ENCODE measurements at regions of chr4 and their contacts with region 1.

Region 1: GRCh38 chr4:121823505-121824170 is at the start of gene CCNA2:
- DNase-seq: peak; percentile 94
- ATAC-seq: peak; percentile 99
- H3K4me3 ChIP-seq: peak within 1 kb of the TSS; percentile 46 to 96 (median 74)
- H3K4me3 Mint-ChIP-seq: peak within 1 kb of the TSS; percentile 90
- H3K27ac ChIP-seq: peak within 1 kb of the TSS; percentile 62 to 82
- H3K27ac Mint-ChIP-seq: peak within 1 kb of the TSS; percentile 87
- H3K4me1 ChIP-seq: peaks cover 8 to 10% of the 10 kb centered on the region in 2 donors
- H3K4me1 Mint-ChIP-seq: peaks cover 16% of the 10 kb centered on the region
- H3K27me3 ChIP-seq: no peaks in the 10 kb centered on the region
- H3K27me3 Mint-ChIP-seq: no peaks in the 10 kb centered on the region
- CTCF ChIP-seq: no peak
- total RNA-seq, gene CCNA2: 0.94 and 1.8 TPM in 2 replicates

Region 2: GRCh38 chr4:121696581-121697461 is 126.8 kb before region 1 on chr4 and contains the start of gene ANXA5:
- CTCF ChIA-PET with region 1: no interaction called
- POLR2A ChIA-PET with region 1: no interaction called
- intact Hi-C with region 1: loop called (anchors 1 kb)
- DNase-seq: peak; percentile 78
- ATAC-seq: peak; percentile 90
- H3K4me3 ChIP-seq: peak within 1 kb of the TSS; percentile 73 to 85 (median 79)
- H3K4me3 Mint-ChIP-seq: peak within 1 kb of the TSS; percentile 99
- H3K27ac ChIP-seq: peak within 1 kb of the TSS; percentile 39 to 69
- H3K27ac Mint-ChIP-seq: peak within 1 kb of the TSS; percentile 98
- H3K4me1 ChIP-seq: peaks cover 13 to 14% of the 10 kb centered on the region in 2 donors
- H3K4me1 Mint-ChIP-seq: peaks cover 36% of the 10 kb centered on the region
- H3K27me3 ChIP-seq: peaks cover 0 to 12% (median 0%) of the 10 kb centered on the region in 4 experiments
- H3K27me3 Mint-ChIP-seq: peaks cover 12% of the 10 kb centered on the region
- CTCF ChIP-seq: no peak
- total RNA-seq, gene ANXA5: 66.5 and 67.8 TPM in 2 replicates

Measured in B cell (primary cell).